A549 (cell line): ENCODE measurements at regions of chr6 and their contacts with region 1.

Region 1: GRCh38 chr6:160930547-160931377 is 60.8 kb upstream of the MAP3K4 start:
- DNase-seq: peak; percentile 58 to 72
- ATAC-seq: peak; percentile 96 to 99
- H3K4me3 ChIP-seq: peak overlapping the region; percentile 41
- H3K27ac ChIP-seq: peak overlapping the region; percentile 23 to 60; a peak in 4 of 6 replicates
- H3K4me1 ChIP-seq: no peaks in the 10 kb centered on the region
- CTCF ChIP-seq: peak; percentile 75
- EP300 ChIP-seq: no peak
- POLR2A ChIP-seq: no peak
- RAD21 ChIP-seq: peak; percentile 83 to 89

Region 2: DNA sequence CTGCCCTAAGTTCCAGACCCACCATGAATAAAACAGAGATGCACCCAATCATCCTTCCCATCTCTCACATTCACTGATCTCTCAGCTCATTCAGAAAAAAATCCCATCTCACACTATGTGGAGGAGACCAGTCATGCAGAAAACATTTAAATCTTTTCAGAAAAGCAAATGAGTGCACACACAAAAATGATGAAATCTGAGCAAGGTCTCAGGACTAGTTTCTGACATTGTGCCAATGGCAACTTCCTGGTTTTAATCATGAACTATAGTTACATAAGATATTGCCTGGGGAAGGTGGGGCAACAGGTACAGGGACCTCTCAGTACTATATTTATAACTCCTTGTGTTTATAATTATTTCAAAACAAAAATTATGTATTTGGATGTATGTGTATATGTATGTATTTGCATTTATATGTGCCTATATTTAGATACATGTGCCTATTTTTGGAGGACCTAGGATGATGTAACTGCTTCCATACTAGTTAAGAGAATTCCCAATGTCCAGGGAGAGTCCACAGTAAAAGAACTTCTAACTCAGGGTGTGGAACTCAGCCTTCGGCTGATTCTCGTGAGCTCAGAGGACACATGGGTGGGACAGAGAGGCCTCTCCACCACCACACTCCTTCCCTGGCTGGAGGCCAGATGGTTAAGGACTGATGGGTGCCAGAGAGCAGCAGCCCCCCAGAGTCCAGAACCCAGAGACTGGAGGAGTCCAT is 10.9 kb before region 1 on chr6:
- CTCF ChIA-PET with region 1: interaction called, 15 read pairs
- POLR2A ChIA-PET with region 1: no interaction called
- DNase-seq: peak in 1 of 2 experiments; percentile 11
- ATAC-seq: peak in 1 of 2 experiments; percentile 34; a peak in 1 of 6 replicates
- H3K4me3 ChIP-seq: no peak overlapping the region
- H3K27ac ChIP-seq: peak overlapping the region in 1 of 2 experiments; percentile 40; a peak in 1 of 6 replicates
- H3K4me1 ChIP-seq: peaks cover 13% of the 10 kb centered on the region; the same call in 1 of the 3 replicates
- CTCF ChIP-seq: no peak
- EP300 ChIP-seq: no peak
- POLR2A ChIP-seq: no peak
- RAD21 ChIP-seq: no peak

Region 3: GRCh38 chr6:160971171-160971570 is 40.4 kb after region 1 on chr6:
- CTCF ChIA-PET with region 1: interaction called, 10 read pairs
- POLR2A ChIA-PET with region 1: no interaction called
- DNase-seq: no peak
- ATAC-seq: no peak
- H3K4me3 ChIP-seq: no peak overlapping the region
- H3K27ac ChIP-seq: no peak overlapping the region
- H3K4me1 ChIP-seq: no peaks in the 10 kb centered on the region
- CTCF ChIP-seq: no peak
- EP300 ChIP-seq: no peak
- POLR2A ChIP-seq: no peak
- RAD21 ChIP-seq: no peak

Region 4: DNA sequence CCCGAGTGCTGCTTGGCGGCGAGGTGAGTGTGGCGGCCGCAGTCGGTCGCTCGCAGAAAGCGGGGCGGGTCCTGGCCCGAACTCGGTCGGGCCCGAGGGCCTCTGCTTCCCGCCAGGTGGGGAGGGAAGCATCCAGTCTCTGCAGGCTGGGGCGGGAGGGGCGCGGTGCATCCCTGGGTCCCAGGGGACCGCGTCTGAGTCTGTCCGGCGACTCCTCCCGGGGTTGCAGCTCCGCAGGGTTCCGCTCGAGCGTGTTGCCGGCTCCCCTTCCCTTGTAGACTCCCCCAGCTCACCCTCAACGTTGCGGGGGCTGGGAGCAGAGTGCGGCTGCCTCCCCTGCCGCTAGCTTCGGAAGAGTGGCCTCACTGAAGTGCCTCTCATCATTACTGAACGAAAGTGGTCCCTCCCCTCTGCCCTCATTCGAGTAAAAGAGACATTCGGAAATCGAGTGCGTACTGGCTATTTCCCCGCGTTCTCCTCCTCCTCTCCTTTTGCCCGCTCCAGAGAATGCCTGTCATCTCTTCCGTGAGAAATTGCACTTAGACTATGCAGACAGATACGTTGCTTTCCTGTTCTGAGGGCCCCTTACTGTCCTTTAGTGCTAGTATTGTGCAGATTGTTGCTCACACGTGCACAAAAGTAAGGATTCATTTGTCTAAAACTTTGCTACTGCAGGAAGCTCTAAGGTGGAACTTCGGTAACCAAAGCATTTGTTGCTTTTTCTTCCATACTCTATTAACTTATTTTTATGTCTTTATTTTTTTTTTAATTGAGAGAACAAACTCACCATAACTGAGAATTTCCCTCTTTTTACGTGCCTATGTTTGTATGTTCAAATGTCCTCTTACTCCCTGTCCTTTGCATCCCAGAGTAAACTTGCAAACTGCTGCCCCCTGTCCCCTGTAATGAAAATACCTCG is 61.6 kb after region 1 on chr6:
- CTCF ChIA-PET with region 1: interaction called, 49 read pairs
- POLR2A ChIA-PET with region 1: no interaction called
- DNase-seq: peak; percentile 51 to 67
- ATAC-seq: peak; percentile 77 to 79
- H3K4me3 ChIP-seq: peak overlapping the region; percentile 81
- H3K27ac ChIP-seq: peak overlapping the region; percentile 92 to 98
- H3K4me1 ChIP-seq: peaks cover 5% of the 10 kb centered on the region; the same call in 1 of the 3 replicates
- CTCF ChIP-seq: peak; percentile 49
- EP300 ChIP-seq: no peak
- POLR2A ChIP-seq: no peak
- RAD21 ChIP-seq: peak; percentile 36 to 39; a peak in 3 of 5 replicates